ENCODE measurements at regions of chr4 and their contacts with region 1.

Region 1: DNA sequence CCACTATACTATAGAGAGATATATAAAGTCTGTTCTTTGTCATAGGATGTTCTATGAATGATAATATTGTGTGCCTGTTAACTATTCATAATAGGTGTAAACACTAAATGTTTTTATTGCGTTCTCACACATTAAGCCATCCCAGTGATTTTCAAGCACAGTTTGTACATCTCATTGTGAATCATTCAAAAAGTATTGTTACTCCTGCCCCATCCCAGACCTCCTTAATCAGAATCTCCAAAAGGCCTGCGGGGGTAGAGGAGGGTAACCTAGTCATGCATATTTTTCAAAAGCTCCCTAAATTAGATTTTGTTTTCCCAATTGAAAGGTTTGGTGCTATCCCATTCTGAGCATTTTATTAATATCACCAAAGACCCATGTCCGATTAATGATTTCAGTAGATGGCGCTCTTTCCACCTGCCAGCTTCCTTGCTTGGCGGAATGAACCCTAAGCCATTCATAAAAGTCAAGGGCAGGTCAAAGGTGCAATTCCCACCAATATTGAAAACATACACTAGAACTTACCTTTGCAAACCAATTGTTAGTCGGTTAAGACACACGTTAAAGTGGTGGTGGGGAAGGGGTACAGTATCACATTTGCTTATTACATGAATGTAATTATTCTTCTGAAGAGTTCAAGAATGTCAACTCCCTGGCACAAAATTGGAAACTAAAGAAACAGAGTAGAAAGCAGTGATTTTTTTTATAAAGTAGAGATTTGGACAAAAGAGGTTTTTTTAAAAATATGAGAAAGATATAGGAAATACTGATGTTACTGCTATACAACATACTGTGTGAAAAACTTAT is 5.8 kb upstream of the TET2 start:
- DNase-seq: peak in 8 of 9 donors; percentile 24 to 62 (median 54)
- ATAC-seq: peak; percentile 46
- H3K4me3 ChIP-seq: no peak overlapping the region
- H3K4me3 Mint-ChIP-seq: no peak overlapping the region
- H3K27ac ChIP-seq: no peak overlapping the region
- H3K27ac Mint-ChIP-seq: no peak overlapping the region
- H3K4me1 ChIP-seq: peaks cover 0 to under 1% of the 10 kb centered on the region in 2 donors
- H3K4me1 Mint-ChIP-seq: peaks cover 0 to 17% (median 8%) of the 10 kb centered on the region in 7 donors
- H3K27me3 ChIP-seq: no peaks in the 10 kb centered on the region
- H3K27me3 Mint-ChIP-seq: peaks cover 0 to 2% (median 0%) of the 10 kb centered on the region in 5 donors

Region 2: DNA sequence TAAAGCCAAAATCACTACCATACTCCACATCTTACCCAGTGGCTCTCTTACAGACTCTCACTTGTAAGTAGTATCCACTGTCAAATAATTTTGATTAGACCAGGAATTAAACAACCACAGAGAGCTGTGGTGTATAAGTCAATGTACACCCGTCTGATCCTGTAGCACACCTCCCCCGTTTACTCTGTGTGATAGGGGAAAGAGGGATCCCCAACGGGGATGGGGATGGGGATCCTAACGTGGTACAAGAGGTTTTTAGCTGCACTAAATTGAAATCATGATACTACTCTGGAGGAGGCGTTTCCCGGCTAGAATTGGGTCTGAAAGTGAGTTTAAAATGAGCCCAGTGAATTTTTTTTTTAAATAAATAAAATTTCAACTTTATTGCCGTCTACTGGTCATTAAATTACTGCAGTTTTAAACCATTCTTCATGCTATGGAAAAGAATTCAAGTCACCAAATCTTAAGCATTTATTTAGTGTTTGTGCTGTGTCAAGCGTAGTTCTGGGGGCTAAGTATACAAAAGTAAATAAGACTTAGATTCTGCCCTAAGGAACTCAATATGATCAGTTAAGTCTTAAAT is 491.0 kb after region 1 on chr4:
- CTCF ChIA-PET with region 1: no interaction called
- POLR2A ChIA-PET with region 1: no interaction called
- intact Hi-C with region 1: loop called in 1 of 2 experiments (anchors 2 kb)
- DNase-seq: no peak
- ATAC-seq: no peak
- H3K4me3 ChIP-seq: no peak overlapping the region
- H3K4me3 Mint-ChIP-seq: no peak overlapping the region
- H3K27ac ChIP-seq: no peak overlapping the region
- H3K27ac Mint-ChIP-seq: no peak overlapping the region
- H3K4me1 ChIP-seq: no peaks in the 10 kb centered on the region
- H3K4me1 Mint-ChIP-seq: no peaks in the 10 kb centered on the region
- H3K27me3 ChIP-seq: no peaks in the 10 kb centered on the region
- H3K27me3 Mint-ChIP-seq: peaks cover 6 to 15% (median 15%) of the 10 kb centered on the region in 5 donors

Region 3: GRCh38 chr4:105715692-105716278 is 574.9 kb after region 1 on chr4:
- CTCF ChIA-PET with region 1: no interaction called
- POLR2A ChIA-PET with region 1: no interaction called
- intact Hi-C with region 1: loop called in 1 of 2 experiments (anchors 1 kb)
- DNase-seq: peak in 5 of 9 donors; percentile 3 to 27 (median 23)
- ATAC-seq: peak; percentile 47
- H3K4me3 ChIP-seq: no peak overlapping the region
- H3K4me3 Mint-ChIP-seq: peak overlapping the region in 1 of 10 donors; percentile 10
- H3K27ac ChIP-seq: no peak overlapping the region
- H3K27ac Mint-ChIP-seq: no peak overlapping the region
- H3K4me1 ChIP-seq: no peaks in the 10 kb centered on the region
- H3K4me1 Mint-ChIP-seq: peaks cover 0 to 12% (median 4%) of the 10 kb centered on the region in 7 donors
- H3K27me3 ChIP-seq: no peaks in the 10 kb centered on the region
- H3K27me3 Mint-ChIP-seq: peaks cover 0 to 3% (median 0%) of the 10 kb centered on the region in 5 donors